ENCODE measurements at regions of chr7 and their contacts with region 1.

Region 1: DNA sequence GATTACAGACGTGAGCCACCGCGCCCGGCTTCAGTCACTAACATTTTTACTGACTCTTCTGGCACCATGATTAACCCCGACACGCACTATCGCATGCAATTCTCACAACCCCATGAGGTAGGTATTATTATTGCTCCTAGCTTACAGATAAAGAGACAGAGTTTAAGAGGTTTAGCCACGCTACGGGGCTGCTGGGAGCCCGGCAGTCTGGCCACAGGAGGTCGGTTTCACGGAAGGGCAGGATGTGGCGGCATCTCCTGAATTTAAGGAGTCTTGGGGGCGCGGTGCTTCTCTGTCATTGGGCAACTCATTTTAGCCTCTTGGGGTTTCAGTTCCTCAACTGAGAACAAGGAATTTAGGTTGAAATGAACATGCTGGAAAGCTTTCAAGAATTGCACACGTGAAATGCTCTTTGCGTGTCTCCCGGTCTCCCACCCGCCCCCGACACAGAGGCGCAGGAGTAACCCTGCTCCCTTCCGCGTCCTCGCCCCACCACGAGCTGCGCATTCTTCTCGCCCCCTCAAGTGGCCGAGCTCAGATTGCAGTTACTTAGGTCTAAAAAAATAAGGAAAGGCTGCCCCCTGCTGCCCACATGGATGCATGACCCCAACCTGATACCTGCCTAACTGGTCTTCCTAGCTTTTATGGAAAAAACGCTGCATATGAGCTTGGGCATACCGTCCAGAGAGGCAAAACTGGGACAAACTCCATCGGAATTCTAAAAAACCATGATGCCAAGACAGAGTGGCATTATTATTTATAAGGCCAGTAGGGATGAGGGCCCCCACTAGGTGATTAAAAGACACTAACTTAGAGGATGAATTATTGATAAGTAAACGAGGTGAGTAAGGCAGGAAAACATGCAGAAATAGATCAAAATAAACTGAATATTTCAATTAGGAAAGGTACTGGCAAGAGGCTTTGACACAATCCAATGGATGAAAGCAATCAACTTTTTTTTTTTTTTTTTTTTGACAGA is 12.4 kb downstream of the PRSS2 start:
- DNase-seq: peak; percentile 96
- H3K4me3 ChIP-seq: peak overlapping the region; percentile 59
- H3K27ac ChIP-seq: peak overlapping the region; percentile 31
- H3K4me1 ChIP-seq: peaks cover 56% of the 10 kb centered on the region
- CTCF ChIP-seq: peak; percentile 99

Region 2: DNA sequence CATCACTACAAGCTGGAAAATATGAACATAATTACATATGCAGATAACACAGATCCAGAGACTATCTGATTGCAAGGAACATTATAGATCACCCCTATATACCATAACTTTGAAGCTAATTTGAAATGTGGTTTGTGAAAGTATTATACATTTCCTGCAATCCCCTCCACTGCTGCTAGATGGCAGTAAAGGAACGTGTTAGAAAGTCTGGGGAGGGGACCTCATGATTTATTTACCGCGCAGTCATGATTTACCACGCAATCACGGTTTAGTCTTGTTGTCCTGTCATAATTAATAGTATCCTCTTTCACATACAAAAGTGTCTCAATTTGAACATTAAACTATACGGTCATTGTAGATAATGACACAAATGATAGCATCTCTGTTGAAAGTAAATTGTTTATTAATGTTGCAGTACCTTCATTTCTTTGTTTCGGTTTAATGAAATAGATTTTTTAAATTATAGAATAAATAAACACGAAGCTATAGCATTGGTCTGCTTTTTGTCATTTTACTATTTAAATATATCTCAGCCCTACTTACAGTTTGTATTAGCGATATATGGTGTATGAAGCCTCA is 179.3 kb before region 1 on chr7:
- CTCF ChIA-PET with region 1: no interaction called
- POLR2A ChIA-PET with region 1: interaction called, 4 read pairs
- intact Hi-C with region 1: loop called (anchors 1 kb)
- DNase-seq: peak; percentile 73
- H3K4me3 ChIP-seq: peak overlapping the region; percentile 29
- H3K27ac ChIP-seq: no peak overlapping the region
- H3K4me1 ChIP-seq: no peaks in the 10 kb centered on the region
- CTCF ChIP-seq: peak; percentile 96

Region 3: GRCh38 chr7:142654398-142654797 is 128.8 kb before region 1 on chr7:
- CTCF ChIA-PET with region 1: no interaction called
- POLR2A ChIA-PET with region 1: interaction called, 3 read pairs
- intact Hi-C with region 1: loop called (anchors 1 kb)
- DNase-seq: peak; percentile 17
- H3K4me3 ChIP-seq: no peak overlapping the region
- H3K27ac ChIP-seq: no peak overlapping the region
- H3K4me1 ChIP-seq: no peaks in the 10 kb centered on the region
- CTCF ChIP-seq: peak; percentile 75

Region 4: GRCh38 chr7:142689439-142690120 is 93.6 kb before region 1 on chr7:
- CTCF ChIA-PET with region 1: interaction called, 8 read pairs
- POLR2A ChIA-PET with region 1: interaction called, 4 read pairs
- intact Hi-C with region 1: loop called (anchors 1 kb)
- DNase-seq: peak; percentile 50
- H3K4me3 ChIP-seq: no peak overlapping the region
- H3K27ac ChIP-seq: no peak overlapping the region
- H3K4me1 ChIP-seq: peaks cover 7% of the 10 kb centered on the region
- CTCF ChIP-seq: peak; percentile 85

Region 5: GRCh38 chr7:142739923-142740492 is 43.2 kb before region 1 on chr7:
- CTCF ChIA-PET with region 1: no interaction called
- POLR2A ChIA-PET with region 1: no interaction called
- intact Hi-C with region 1: loop called (anchors 1 kb)
- DNase-seq: peak; percentile 84
- H3K4me3 ChIP-seq: peak overlapping the region; percentile 10
- H3K27ac ChIP-seq: no peak overlapping the region
- H3K4me1 ChIP-seq: peaks cover 28% of the 10 kb centered on the region
- CTCF ChIP-seq: peak; percentile 75

Region 6: DNA sequence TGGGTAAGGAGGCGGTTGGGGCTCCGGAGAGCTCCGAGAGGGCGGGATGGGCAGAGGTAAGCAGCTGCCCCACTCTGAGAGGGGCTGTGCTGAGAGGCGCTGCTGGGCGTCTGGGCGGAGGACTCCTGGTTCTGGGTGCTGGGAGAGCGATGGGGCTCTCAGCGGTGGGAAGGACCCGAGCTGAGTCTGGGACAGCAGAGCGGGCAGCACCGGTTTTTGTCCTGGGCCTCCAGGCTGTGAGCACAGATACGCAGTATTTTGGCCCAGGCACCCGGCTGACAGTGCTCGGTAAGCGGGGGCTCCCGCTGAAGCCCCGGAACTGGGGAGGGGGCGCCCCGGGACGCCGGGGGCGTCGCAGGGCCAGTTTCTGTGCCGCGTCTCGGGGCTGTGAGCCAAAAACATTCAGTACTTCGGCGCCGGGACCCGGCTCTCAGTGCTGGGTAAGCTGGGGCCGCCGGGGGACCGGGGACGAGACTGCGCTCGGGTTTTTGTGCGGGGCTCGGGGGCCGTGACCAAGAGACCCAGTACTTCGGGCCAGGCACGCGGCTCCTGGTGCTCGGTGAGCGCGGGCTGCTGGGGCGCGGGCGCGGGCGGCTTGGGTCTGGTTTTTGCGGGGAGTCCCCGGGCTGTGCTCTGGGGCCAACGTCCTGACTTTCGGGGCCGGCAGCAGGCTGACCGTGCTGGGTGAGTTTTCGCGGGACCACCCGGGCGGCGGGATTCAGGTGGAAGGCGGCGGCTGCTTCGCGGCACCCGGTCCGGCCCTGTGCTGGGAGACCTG is 13.6 kb after region 1 on chr7:
- CTCF ChIA-PET with region 1: interaction called, 13 read pairs
- POLR2A ChIA-PET with region 1: interaction called, 666 read pairs
- intact Hi-C with region 1: no loop called
- DNase-seq: peak; percentile 58
- H3K4me3 ChIP-seq: peak overlapping the region; percentile 81
- H3K27ac ChIP-seq: peak overlapping the region; percentile 88
- H3K4me1 ChIP-seq: peaks cover 73% of the 10 kb centered on the region
- CTCF ChIP-seq: no peak

Region 7: DNA sequence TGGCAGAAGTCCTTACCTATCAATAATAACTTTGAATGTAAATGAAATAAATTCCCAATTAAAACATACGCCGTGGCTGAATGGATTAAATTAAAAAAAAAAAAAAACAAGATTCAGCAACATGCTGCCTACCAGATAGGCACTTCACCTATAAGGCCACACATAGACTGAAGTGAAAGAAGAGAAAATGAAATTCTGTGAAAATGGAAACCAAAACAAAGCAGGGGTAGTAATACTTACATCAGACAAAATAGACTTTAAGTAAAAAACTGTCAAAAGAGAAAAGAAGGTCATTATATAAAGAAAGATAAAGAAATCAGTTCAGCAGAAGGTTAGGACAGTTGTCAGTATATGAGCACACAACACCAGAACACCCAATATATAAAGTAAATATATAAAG is 1063.5 kb after region 1 on chr7:
- CTCF ChIA-PET with region 1: no interaction called
- POLR2A ChIA-PET with region 1: no interaction called
- intact Hi-C with region 1: no loop called
- DNase-seq: no peak
- H3K4me3 ChIP-seq: no peak overlapping the region
- H3K27ac ChIP-seq: no peak overlapping the region
- H3K4me1 ChIP-seq: no peaks in the 10 kb centered on the region
- CTCF ChIP-seq: no peak

Measured in OCI-LY7 (cell line).